ENCODE measurements at regions of chr5 and their contacts with region 1.

Region 1: GRCh38 chr5:43066799-43067741 is 27.0 kb upstream of the ANXA2R start:
- DNase-seq: peak; percentile 86
- H3K4me3 Mint-ChIP-seq: peak overlapping the region; percentile 84
- H3K27ac Mint-ChIP-seq: peak overlapping the region; percentile 88
- H3K4me1 Mint-ChIP-seq: peaks cover 41% of the 10 kb centered on the region
- H3K27me3 Mint-ChIP-seq: no peaks in the 10 kb centered on the region
- CTCF ChIP-seq: no peak

Region 2: GRCh38 chr5:42896523-42896922 is 170.5 kb before region 1 on chr5:
- CTCF ChIA-PET with region 1: interaction called, 10 read pairs
- intact Hi-C with region 1: no loop called
- DNase-seq: no peak
- H3K4me3 Mint-ChIP-seq: no peak overlapping the region
- H3K27ac Mint-ChIP-seq: no peak overlapping the region
- H3K4me1 Mint-ChIP-seq: no peaks in the 10 kb centered on the region
- H3K27me3 Mint-ChIP-seq: no peaks in the 10 kb centered on the region
- CTCF ChIP-seq: no peak

Measured in Calu3 (cell line).